Ascending aorta (tissue), 2 donors: ENCODE measurements at regions of chr2 and their contacts with region 1.

Region 1: DNA sequence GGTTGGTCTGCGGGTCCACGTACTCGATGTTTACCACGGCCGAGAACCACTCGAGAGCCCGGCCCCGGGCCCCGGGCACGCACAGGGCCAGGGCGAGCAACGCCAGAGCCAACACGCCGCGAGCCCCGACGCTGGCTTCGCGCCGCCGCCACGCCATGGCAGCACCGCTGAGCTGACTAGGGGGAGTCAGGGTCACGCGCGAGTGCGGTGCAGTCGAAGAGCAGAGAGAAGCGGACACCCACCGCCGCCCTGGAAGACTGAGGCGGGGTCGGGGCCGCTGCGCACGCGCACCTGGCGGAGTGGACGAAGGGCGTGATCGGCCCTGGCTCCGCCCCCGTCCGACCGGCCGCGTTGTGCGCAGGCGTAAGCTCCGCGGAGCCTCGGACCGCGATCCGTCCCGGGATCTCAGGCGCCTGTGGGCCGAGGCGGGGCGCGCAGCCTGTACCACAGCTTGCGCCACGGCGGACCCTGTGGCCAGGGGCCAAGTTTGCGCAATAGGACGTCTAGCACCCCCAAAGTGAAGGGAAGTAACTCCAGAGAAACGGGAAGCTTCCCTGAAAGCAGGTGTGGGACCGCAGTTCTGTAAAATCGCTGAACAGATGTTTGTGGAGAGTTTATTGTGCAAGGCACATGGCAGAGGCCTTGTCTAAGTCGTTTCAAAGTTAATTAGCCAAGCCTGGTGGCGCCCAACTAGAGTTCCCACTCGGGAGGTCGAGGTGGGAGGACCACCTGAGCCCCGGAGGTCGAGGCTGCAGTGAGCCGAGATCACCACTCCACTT is at the start of gene RNF149:
- DNase-seq: peak; percentile 77 to 96
- H3K4me3 ChIP-seq: peak within 1 kb of the TSS; percentile 76 to 95
- H3K27ac ChIP-seq: peak within 1 kb of the TSS; percentile 92 to 94
- H3K4me1 ChIP-seq: peaks cover 3 to 16% of the 10 kb centered on the region in 2 donors
- H3K27me3 ChIP-seq: no peaks in the 10 kb centered on the region
- CTCF ChIP-seq: no peak
- total RNA-seq, gene RNF149: 39.9 TPM

Region 2: GRCh38 chr2:101252408-101253012 is 56.1 kb before region 1 on chr2 and contains the start of gene CNOT11:
- intact Hi-C with region 1: loop called (anchors 1 kb)
- DNase-seq: peak; percentile 93 to 99
- H3K4me3 ChIP-seq: peak within 1 kb of the TSS; percentile 83 to 95
- H3K27ac ChIP-seq: peak within 1 kb of the TSS; percentile 90 to 97
- H3K4me1 ChIP-seq: peaks cover 4 to 11% of the 10 kb centered on the region in 2 donors
- H3K27me3 ChIP-seq: no peaks in the 10 kb centered on the region
- CTCF ChIP-seq: peak in 1 of 3 experiments; percentile 25
- total RNA-seq, gene CNOT11: 32.5 TPM